ENCODE measurements at regions of chr16 and their contacts with region 1.

Region 1: GRCh38 chr16:69741919-69742904 is 12.5 kb downstream of the NOB1 start:
- DNase-seq: no peak
- H3K4me3 Mint-ChIP-seq: no peak overlapping the region
- H3K27ac Mint-ChIP-seq: no peak overlapping the region
- H3K4me1 Mint-ChIP-seq: no peaks in the 10 kb centered on the region
- H3K27me3 Mint-ChIP-seq: no peaks in the 10 kb centered on the region

Region 2: GRCh38 chr16:69644790-69645189 is 97.4 kb before region 1 on chr16:
- CTCF ChIA-PET with region 1: no interaction called
- POLR2A ChIA-PET with region 1: no interaction called
- DNase-seq: no peak
- H3K4me3 Mint-ChIP-seq: no peak overlapping the region
- H3K27ac Mint-ChIP-seq: no peak overlapping the region
- H3K4me1 Mint-ChIP-seq: peaks cover 5% of the 10 kb centered on the region
- H3K27me3 Mint-ChIP-seq: no peaks in the 10 kb centered on the region

Region 3: DNA sequence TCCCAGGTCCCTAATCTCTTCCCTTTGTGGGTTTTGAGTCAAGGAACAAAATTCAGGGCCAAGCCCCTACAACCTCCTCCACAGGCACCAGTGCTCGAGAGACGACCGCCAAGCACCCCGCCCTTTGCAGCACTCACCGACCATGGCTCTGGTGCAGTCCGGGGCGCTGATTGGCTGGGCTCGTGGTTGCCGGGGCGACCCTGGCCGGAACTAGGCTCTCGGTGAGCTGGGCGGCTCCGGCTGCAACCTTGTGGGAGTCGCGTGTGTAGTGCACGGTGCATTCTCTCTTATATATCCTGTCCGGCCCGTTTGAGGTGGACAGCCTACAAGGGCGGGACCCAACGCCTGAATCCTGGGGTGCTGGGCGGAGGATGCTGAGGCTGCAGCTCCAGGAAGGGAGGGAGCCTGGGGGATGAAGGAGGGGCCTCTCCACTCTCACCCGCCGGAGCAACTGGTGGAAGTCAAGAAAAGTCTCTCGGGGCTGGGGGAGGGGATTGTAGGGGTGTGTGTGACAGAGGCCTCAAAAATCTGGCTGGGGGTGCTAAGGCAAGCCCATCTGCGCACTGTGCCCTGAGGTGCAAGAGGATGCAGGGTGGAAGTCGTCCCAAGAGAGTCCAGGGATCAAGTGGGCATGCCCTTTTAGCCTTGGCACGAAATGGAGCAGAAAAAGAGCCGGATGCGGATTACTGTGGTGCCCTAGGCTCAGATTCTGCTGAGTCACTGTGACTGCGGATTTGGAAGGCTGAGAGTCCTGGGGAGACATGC is 15.7 kb before region 1 on chr16 and contains the start of gene NQO1:
- CTCF ChIA-PET with region 1: interaction called, 13 read pairs
- POLR2A ChIA-PET with region 1: no interaction called
- DNase-seq: peak; percentile 95
- H3K4me3 Mint-ChIP-seq: peak within 1 kb of the TSS; percentile 92
- H3K27ac Mint-ChIP-seq: peak within 1 kb of the TSS; percentile 97
- H3K4me1 Mint-ChIP-seq: peaks cover 57% of the 10 kb centered on the region
- H3K27me3 Mint-ChIP-seq: no peaks in the 10 kb centered on the region
- total RNA-seq, gene NQO1: 20.4 to 22.4 TPM